K562 (cell line): ENCODE measurements at regions of chr2 and their contacts with region 1.

Region 1: DNA sequence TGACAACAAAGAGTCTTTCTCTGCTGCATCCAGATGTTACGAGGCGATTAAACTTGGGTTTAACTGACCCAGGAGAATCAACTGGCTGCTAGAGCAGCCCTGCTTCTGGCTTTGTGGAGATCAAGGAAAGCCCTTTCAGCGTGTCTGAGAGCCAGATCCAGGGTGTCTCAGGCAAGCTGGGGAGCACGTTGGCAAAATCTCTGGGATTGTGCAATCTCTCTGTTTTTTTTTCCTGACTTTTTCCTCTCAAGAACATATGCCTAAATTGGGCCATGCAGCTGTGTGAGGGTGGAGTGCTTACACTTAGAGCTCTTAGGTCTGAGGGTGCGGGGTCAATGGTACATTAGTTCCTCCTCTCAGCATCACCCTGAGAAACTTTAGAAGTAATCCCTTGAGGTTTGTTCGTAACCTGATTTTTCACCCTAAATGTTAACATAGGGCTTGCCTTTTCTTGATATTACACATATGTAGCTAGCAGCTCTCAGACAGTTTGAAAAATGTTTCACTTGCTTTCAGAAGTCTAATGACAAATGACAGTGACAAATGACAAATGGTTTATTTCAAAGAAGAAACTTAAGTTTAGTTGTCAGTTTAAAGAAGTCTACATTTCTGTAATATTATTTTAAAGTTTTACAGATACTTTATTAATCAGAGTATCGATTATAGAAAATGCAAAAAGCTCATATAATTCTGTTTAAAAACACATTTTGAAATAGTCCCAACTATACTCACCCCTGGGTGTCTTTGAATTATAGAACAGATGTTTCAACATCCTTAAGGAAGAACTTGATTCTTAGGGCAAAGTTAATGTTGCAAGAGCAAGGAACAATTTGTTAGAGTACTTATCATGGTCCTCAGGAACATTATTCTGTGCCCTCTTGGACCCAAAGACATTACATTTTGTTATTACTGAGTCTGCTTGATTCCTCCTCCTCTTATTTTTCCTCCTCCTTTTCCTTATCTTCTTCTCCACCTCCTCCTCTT is 38.4 kb upstream of the ZSWIM2 start:
- DNase-seq: peak in 3 of 4 experiments; percentile 18 to 78 (median 34)
- ATAC-seq: peak; percentile 86
- H3K4me3 ChIP-seq: no peak overlapping the region
- H3K27ac ChIP-seq: peak overlapping the region; percentile 4; the same call in 1 of the 3 replicates
- H3K4me1 ChIP-seq: peaks cover 0 to 7% of the 10 kb centered on the region in 2 experiments; a peak in 1 of 5 replicates
- H3K27me3 ChIP-seq: no peaks in the 10 kb centered on the region
- CTCF ChIP-seq: no peak
- EP300 ChIP-seq: peak; percentile 6; the same call in 1 of the 2 replicates
- POLR2A ChIP-seq: no peak
- RAD21 ChIP-seq: no peak

Region 2: DNA sequence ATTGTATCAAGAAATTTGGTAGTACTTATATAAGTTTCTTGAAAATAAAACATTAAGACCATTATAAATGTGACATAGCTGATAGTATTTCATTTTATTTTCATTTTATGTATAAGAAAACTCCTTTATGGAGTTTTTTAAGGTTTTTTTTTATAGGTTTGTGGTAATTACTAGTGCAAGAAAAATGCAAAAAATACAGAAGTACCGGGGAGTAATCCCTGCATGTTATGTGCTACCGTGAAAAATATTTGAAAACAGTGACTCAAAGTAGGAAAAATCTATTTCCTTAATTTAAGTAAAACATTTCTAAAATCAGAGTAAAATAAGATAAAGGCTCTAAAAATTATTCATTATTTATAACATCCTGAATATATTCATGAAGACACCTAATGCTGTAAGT is 60.0 kb before region 1 on chr2:
- CTCF ChIA-PET with region 1: no interaction called
- POLR2A ChIA-PET with region 1: no interaction called
- in situ Hi-C with region 1: no loop called
- intact Hi-C with region 1: no loop called
- DNase-seq: no peak
- ATAC-seq: no peak
- H3K4me3 ChIP-seq: no peak overlapping the region
- H3K27ac ChIP-seq: no peak overlapping the region
- H3K4me1 ChIP-seq: no peaks in the 10 kb centered on the region
- H3K27me3 ChIP-seq: no peaks in the 10 kb centered on the region
- CTCF ChIP-seq: no peak
- EP300 ChIP-seq: no peak
- POLR2A ChIP-seq: no peak
- RAD21 ChIP-seq: no peak

Region 3: GRCh38 chr2:187429989-187430388 is 542.6 kb after region 1 on chr2:
- CTCF ChIA-PET with region 1: no interaction called
- POLR2A ChIA-PET with region 1: no interaction called
- in situ Hi-C with region 1: loop called (anchors 25 kb)
- intact Hi-C with region 1: no loop called
- DNase-seq: no peak
- ATAC-seq: no peak
- H3K4me3 ChIP-seq: no peak overlapping the region
- H3K27ac ChIP-seq: no peak overlapping the region
- H3K4me1 ChIP-seq: no peaks in the 10 kb centered on the region
- H3K27me3 ChIP-seq: no peaks in the 10 kb centered on the region
- CTCF ChIP-seq: no peak
- EP300 ChIP-seq: no peak
- POLR2A ChIP-seq: no peak
- RAD21 ChIP-seq: no peak